B cell (primary cell): ENCODE measurements at regions of chr1 and their contacts with region 1.

Region 1: DNA sequence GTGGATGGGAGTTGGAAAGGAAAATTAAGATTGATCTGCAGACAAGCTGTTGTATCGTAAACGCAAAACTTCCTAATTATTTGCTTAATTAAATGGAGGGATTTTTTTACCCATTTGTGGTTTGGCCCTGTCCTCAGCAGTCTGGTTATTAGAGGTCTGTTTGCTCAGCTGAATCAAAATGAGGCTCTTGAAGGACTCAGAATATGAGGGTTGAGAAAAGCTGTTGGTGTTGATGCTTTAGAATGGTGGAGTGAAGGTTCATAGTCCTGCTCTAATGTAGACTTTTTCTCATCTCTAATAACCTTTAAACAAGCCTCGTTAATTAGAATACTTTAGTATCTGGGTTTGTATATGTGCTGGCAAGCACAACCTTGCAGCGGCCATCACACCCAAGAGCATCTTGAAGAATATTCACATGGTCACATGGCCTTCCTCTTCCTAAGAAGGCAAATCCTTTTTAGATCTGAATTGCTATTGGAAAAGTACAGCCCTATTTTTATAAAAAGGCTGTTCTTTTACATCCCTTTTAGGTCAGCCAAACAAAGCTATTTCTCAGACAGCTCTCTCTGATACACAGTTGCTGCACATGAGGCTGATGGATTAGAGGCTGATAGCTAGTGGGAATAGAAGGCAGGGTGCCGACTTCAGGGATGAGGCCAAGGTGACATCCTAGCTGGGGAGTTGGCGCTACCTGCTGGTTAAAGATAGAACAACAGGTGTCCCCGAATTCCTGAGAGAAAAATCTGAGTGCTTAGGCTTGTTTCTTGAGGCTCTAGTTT is 53.8 kb downstream of the MACF1 start:
- DNase-seq: peak; percentile 76
- ATAC-seq: peak; percentile 65
- H3K4me3 ChIP-seq: no peak overlapping the region
- H3K4me3 Mint-ChIP-seq: no peak overlapping the region
- H3K27ac ChIP-seq: peak overlapping the region in 1 of 2 donors; percentile 53
- H3K27ac Mint-ChIP-seq: peak overlapping the region; percentile 59
- H3K4me1 ChIP-seq: peaks cover 12 to 30% of the 10 kb centered on the region in 2 donors
- H3K4me1 Mint-ChIP-seq: peaks cover 30% of the 10 kb centered on the region
- H3K27me3 ChIP-seq: no peaks in the 10 kb centered on the region
- H3K27me3 Mint-ChIP-seq: no peaks in the 10 kb centered on the region
- CTCF ChIP-seq: peak; percentile 92

Region 2: DNA sequence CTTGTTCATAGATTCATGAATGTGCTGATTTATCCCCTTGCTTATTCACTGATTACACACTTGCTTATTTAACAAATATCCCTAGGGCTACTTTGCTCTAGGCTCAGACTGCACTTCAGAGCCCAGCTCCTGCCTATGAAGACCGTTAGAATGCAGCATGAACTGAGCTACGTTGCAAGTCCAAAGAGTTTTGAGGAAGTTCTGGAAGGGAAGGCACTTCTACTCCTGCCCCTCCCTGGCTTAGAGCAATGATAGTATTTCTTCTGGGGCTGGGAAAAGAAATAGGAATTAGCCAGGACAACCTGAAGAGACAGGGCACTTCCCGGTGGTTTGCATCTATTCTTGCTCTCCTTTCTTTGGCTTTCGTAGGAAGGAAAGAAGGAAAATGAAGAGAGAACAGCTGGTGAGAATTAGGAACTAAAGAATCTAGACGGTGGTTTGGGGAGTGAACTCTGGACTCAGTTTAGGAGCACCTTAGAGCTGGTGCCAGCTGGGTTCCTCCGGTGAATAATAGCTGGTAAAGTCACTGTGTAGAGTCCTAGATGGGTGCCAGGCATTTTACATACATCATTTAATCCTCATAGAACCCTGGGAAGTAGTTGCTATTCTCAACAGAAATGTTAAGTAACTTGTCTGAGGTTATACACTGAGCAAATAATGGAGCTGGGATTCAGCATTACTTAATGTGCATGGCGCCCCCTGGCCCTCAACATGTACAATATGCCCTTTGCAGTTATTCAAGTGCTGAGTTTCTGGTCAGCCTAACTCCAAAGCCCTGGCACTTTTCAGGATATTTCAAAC is 166.3 kb before region 1 on chr1:
- CTCF ChIA-PET with region 1: interaction called, 175 read pairs
- POLR2A ChIA-PET with region 1: no interaction called
- intact Hi-C with region 1: no loop called
- DNase-seq: peak; percentile 56
- ATAC-seq: peak; percentile 57
- H3K4me3 ChIP-seq: no peak overlapping the region
- H3K4me3 Mint-ChIP-seq: peak overlapping the region; percentile 46
- H3K27ac ChIP-seq: no peak overlapping the region
- H3K27ac Mint-ChIP-seq: no peak overlapping the region
- H3K4me1 ChIP-seq: no peaks in the 10 kb centered on the region
- H3K4me1 Mint-ChIP-seq: peaks cover 6% of the 10 kb centered on the region
- H3K27me3 ChIP-seq: no peaks in the 10 kb centered on the region
- H3K27me3 Mint-ChIP-seq: peaks cover 4% of the 10 kb centered on the region
- CTCF ChIP-seq: peak; percentile 55

Region 3: GRCh38 chr1:39132505-39133339 is 125.6 kb before region 1 on chr1:
- CTCF ChIA-PET with region 1: interaction called, 12 read pairs
- POLR2A ChIA-PET with region 1: no interaction called
- intact Hi-C with region 1: no loop called
- DNase-seq: no peak
- ATAC-seq: no peak
- H3K4me3 ChIP-seq: no peak overlapping the region
- H3K4me3 Mint-ChIP-seq: no peak overlapping the region
- H3K27ac ChIP-seq: no peak overlapping the region
- H3K27ac Mint-ChIP-seq: no peak overlapping the region
- H3K4me1 ChIP-seq: no peaks in the 10 kb centered on the region
- H3K4me1 Mint-ChIP-seq: no peaks in the 10 kb centered on the region
- H3K27me3 ChIP-seq: no peaks in the 10 kb centered on the region
- H3K27me3 Mint-ChIP-seq: no peaks in the 10 kb centered on the region
- CTCF ChIP-seq: no peak

Region 4: DNA sequence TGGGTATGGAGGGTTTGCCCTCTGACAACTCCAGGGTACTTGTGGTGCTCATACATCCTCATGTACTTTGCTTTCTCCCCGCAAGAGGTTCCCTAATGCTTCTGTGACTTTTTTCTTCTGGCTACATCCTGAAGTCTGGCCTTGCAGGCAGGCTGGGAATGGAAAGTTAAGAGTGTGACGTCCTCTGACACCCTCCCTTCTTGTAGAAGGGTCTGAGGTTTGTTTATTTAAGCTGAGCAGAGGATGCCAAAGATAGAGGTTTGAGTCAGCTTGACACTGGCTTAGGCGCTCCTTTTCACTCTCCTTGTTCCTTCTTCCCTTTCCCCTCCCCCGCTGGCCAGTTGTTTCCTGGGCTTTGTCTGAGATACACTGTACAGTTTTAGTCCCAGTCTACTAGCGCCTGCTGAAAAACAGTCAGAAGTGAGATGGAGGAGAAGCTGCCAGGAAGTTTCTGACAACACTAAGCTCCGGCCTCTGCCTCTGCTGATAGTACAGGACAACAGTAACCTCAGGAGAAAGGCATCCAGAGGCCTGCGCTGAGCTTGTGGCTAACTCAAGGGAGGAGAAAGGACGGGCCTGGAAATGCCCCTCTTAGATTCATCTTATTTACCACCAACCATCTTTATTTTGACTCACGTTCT is 53.8 kb before region 1 on chr1 and contains the start of gene MACF1:
- CTCF ChIA-PET with region 1: interaction called, 30 read pairs
- POLR2A ChIA-PET with region 1: no interaction called
- intact Hi-C with region 1: no loop called
- DNase-seq: peak; percentile 29
- ATAC-seq: peak; percentile 17
- H3K4me3 ChIP-seq: peak within 1 kb of the TSS in 4 of 5 experiments; percentile 7 to 41 (median 22)
- H3K4me3 Mint-ChIP-seq: peak within 1 kb of the TSS; percentile 80
- H3K27ac ChIP-seq: peak within 1 kb of the TSS; percentile 17 to 33
- H3K27ac Mint-ChIP-seq: peak within 1 kb of the TSS; percentile 80
- H3K4me1 ChIP-seq: peaks cover 21 to 22% of the 10 kb centered on the region in 2 donors
- H3K4me1 Mint-ChIP-seq: peaks cover 25% of the 10 kb centered on the region
- H3K27me3 ChIP-seq: no peaks in the 10 kb centered on the region
- H3K27me3 Mint-ChIP-seq: no peaks in the 10 kb centered on the region
- CTCF ChIP-seq: no peak
- total RNA-seq, gene MACF1: 155 and 159 TPM in 2 replicates

Region 5: DNA sequence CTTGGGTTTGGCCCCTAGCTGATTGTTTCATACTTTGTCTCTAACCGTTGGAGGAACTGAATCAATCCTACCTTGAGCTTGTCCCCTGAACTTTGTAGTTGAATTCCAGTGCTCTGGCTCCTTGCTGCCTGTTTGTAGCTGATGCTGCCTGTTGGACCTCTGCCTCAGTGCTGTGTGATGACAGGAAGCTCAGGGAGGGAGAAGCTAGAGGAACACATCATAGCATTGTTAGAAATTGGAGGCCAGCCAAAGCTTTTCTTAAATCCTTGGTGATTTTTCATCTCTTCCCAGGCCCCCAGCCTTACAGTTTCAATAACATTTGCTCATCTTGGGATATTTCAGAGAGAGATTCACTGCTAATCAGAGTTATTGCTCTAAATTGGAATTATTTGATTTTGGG is 19.9 kb before region 1 on chr1:
- CTCF ChIA-PET with region 1: interaction called, 21 read pairs
- POLR2A ChIA-PET with region 1: no interaction called
- intact Hi-C with region 1: no loop called
- DNase-seq: no peak
- ATAC-seq: no peak
- H3K4me3 ChIP-seq: no peak overlapping the region
- H3K4me3 Mint-ChIP-seq: no peak overlapping the region
- H3K27ac ChIP-seq: peak overlapping the region in 1 of 2 donors; percentile 17
- H3K27ac Mint-ChIP-seq: no peak overlapping the region
- H3K4me1 ChIP-seq: peaks cover 8 to 10% of the 10 kb centered on the region in 2 donors
- H3K4me1 Mint-ChIP-seq: peaks cover 24% of the 10 kb centered on the region
- H3K27me3 ChIP-seq: no peaks in the 10 kb centered on the region
- H3K27me3 Mint-ChIP-seq: no peaks in the 10 kb centered on the region
- CTCF ChIP-seq: no peak

Region 6: GRCh38 chr1:39408641-39409054 is 150.3 kb after region 1 on chr1:
- CTCF ChIA-PET with region 1: interaction called, 11 read pairs
- POLR2A ChIA-PET with region 1: no interaction called
- intact Hi-C with region 1: no loop called
- DNase-seq: peak; percentile 87
- ATAC-seq: peak; percentile 86
- H3K4me3 ChIP-seq: peak overlapping the region in 4 of 5 experiments; percentile 47 to 70 (median 64)
- H3K4me3 Mint-ChIP-seq: peak overlapping the region; percentile 90
- H3K27ac ChIP-seq: peak overlapping the region in 1 of 2 donors; percentile 54
- H3K27ac Mint-ChIP-seq: no peak overlapping the region
- H3K4me1 ChIP-seq: peaks cover 16 to 19% of the 10 kb centered on the region in 2 donors
- H3K4me1 Mint-ChIP-seq: peaks cover 30% of the 10 kb centered on the region
- H3K27me3 ChIP-seq: no peaks in the 10 kb centered on the region
- H3K27me3 Mint-ChIP-seq: no peaks in the 10 kb centered on the region
- CTCF ChIP-seq: no peak